Activated T-helper 2 cell treated with anti-CD3 and anti-CD28 coated beads, Interferon-gamma antibody, Interleukin-2, Interleukin-4, amounts not matched to agents 10 μg/mL and 5 μg/mL and 100 μg/mL, durations not matched to agents 14 hours and 24 hours and 36 hours (primary cell): ENCODE measurements at regions of chr16 and their contacts with region 1.

Region 1: DNA sequence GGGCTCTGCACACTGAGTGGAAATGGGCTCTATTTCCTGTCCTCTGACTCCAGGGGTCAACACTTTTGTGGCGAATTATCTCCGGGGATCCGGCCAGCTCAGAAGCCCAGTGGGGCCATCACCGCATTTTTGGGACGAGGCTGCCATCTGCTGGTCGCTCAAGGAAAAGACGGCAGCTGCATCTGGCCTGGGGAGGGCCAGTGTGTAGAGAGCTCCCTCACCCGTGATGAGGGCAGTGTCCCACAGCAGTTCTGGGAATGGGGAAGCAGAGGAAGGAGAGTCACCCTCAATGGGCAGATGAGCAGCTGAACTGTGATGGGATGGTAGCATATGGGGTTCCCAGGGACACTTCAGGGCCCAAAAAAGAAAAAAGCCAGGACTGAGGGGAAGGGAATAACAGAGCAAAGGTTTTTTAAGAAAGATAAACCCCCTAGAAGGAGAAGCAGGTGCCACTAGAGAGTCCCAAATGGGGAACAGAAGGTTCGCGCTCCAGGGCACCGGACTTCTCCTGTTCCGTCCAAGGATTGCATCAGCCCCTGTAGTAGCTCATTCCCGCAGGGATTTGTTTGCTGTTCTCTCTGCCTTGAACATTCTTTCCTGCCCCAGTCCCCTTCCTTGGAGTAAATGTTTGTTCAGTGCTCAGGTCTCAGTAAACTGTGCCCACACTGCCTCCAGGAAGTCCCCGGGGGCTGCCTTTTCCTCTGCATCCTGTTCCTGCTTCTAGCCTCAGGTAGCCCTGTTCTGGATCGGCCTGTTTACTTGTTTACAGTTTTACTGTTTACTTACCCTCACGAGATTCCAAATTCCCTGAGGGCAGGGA is 9.3 kb upstream of the ABCC12 start:
- DNase-seq: peak; percentile 46
- H3K4me3 Mint-ChIP-seq: no peak overlapping the region
- H3K27ac Mint-ChIP-seq: no peak overlapping the region
- H3K4me1 Mint-ChIP-seq: peaks cover 4% of the 10 kb centered on the region
- H3K27me3 Mint-ChIP-seq: peaks cover 21% of the 10 kb centered on the region

Region 2: GRCh38 chr16:46947900-46948547 is 1217.1 kb before region 1 on chr16:
- intact Hi-C with region 1: loop called (anchors 2 kb)
- DNase-seq: no peak
- H3K4me3 Mint-ChIP-seq: no peak overlapping the region
- H3K27ac Mint-ChIP-seq: no peak overlapping the region
- H3K4me1 Mint-ChIP-seq: peaks cover 9% of the 10 kb centered on the region
- H3K27me3 Mint-ChIP-seq: no peaks in the 10 kb centered on the region